ENCODE measurements at regions of chr17 and their contacts with region 1.

Region 1: GRCh38 chr17:56779898-56780733 is 53.6 kb downstream of the C17orf67 start:
- DNase-seq: peak; percentile 80 to 87 (median 84)
- H3K4me3 ChIP-seq: peak overlapping the region in 1 of 2 donors; percentile 58
- H3K4me3 Mint-ChIP-seq: peak overlapping the region; percentile 88 to 100 (median 92)
- H3K27ac ChIP-seq: peak overlapping the region; percentile 56
- H3K27ac Mint-ChIP-seq: peak overlapping the region; percentile 94 to 99 (median 95)
- H3K4me1 ChIP-seq: peaks cover 16% of the 10 kb centered on the region
- H3K4me1 Mint-ChIP-seq: peaks cover 11 to 26% (median 18%) of the 10 kb centered on the region in 4 donors
- H3K27me3 ChIP-seq: no peaks in the 10 kb centered on the region
- H3K27me3 Mint-ChIP-seq: no peaks in the 10 kb centered on the region

Region 2: DNA sequence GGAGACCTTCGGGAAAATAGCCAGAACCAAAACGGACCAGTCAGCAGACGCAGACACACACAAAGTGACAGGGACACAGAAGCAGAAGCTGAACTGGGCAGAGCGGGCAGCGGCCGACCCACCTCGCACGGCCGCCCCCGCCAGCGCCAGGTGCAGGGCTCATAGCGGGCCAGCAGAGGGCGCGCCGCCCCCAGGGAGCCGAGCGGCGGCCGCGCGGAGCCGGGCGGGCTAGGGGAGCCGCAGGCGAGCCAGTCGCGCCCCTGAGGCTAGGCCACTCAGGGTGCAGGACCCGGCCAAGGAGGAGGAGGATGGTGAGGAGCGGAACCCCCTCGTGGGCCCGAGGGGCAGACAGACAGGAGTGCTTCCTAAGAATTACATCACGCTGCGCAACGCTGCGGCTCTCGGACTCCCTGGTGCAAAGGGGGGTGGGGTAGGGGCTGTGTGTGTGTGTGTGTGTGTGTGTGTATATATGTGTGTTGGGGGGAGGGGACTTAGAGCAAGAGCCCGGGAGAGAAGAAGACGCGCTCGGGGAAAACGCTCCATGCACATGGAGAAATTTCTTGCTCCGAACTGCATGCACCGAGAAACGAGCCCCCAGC is 187.5 kb before region 1 on chr17:
- CTCF ChIA-PET with region 1: interaction called, 64 read pairs
- POLR2A ChIA-PET with region 1: interaction called, 7 read pairs
- intact Hi-C with region 1: loop called (anchors 1 kb)
- DNase-seq: peak; percentile 50 to 61 (median 56)
- H3K4me3 ChIP-seq: peak overlapping the region; percentile 26 to 36
- H3K4me3 Mint-ChIP-seq: peak overlapping the region; percentile 73 to 89 (median 79)
- H3K27ac ChIP-seq: no peak overlapping the region
- H3K27ac Mint-ChIP-seq: peak overlapping the region in 1 of 7 donors; percentile 41
- H3K4me1 ChIP-seq: peaks cover 36% of the 10 kb centered on the region
- H3K4me1 Mint-ChIP-seq: peaks cover 11 to 41% (median 18%) of the 10 kb centered on the region in 4 donors
- H3K27me3 ChIP-seq: peaks cover 13% of the 10 kb centered on the region
- H3K27me3 Mint-ChIP-seq: peaks cover 28 to 46% of the 10 kb centered on the region in 2 donors

Region 3: GRCh38 chr17:56608951-56609350 is 171.2 kb before region 1 on chr17:
- CTCF ChIA-PET with region 1: interaction called, 11 read pairs
- POLR2A ChIA-PET with region 1: no interaction called
- intact Hi-C with region 1: no loop called
- DNase-seq: no peak
- H3K4me3 ChIP-seq: no peak overlapping the region
- H3K4me3 Mint-ChIP-seq: no peak overlapping the region
- H3K27ac ChIP-seq: no peak overlapping the region
- H3K27ac Mint-ChIP-seq: no peak overlapping the region
- H3K4me1 ChIP-seq: no peaks in the 10 kb centered on the region
- H3K4me1 Mint-ChIP-seq: peaks cover 0 to 3% (median 0%) of the 10 kb centered on the region in 4 donors
- H3K27me3 ChIP-seq: no peaks in the 10 kb centered on the region
- H3K27me3 Mint-ChIP-seq: peaks cover 12 to 13% of the 10 kb centered on the region in 2 donors

Region 4: DNA sequence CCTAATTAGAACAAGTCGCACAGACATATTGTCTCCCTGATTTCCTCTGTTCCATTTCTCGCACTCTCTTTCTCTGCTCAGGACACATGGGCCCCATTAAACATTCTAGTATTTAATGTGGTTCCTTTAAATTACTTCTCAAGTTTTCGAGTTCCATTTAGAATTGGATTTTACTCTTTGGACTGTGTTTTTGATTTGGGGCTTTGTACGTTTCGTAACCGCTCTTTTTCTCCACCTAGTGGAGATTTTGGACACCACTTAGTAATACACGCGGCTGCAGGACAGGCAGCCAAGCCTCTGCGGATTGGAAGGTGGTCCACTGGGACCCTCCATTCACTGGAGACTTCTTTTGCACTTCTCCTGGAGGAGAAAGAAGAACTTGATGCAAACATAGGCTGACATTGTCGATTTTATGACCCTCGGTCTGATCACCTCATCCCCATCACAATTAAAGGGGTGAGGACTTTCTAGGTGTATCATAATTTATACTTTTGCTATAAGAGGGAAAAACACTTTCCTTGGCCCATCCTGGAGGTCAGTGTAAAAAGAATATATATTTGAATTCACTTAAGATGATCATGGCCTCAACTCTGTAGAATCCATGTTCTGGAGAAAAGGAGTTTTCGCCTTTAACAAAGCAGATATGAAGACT is 100.9 kb before region 1 on chr17:
- CTCF ChIA-PET with region 1: interaction called, 3 read pairs
- POLR2A ChIA-PET with region 1: no interaction called
- intact Hi-C with region 1: loop called (anchors 1 kb)
- DNase-seq: peak in 3 of 5 donors; percentile 8 to 15 (median 14)
- H3K4me3 ChIP-seq: no peak overlapping the region
- H3K4me3 Mint-ChIP-seq: peak overlapping the region; percentile 61 to 81 (median 75)
- H3K27ac ChIP-seq: no peak overlapping the region
- H3K27ac Mint-ChIP-seq: no peak overlapping the region
- H3K4me1 ChIP-seq: peaks cover 39% of the 10 kb centered on the region
- H3K4me1 Mint-ChIP-seq: peaks cover 17 to 21% (median 20%) of the 10 kb centered on the region in 4 donors
- H3K27me3 ChIP-seq: peaks cover 25% of the 10 kb centered on the region
- H3K27me3 Mint-ChIP-seq: peaks cover 46 to 48% of the 10 kb centered on the region in 2 donors

Region 5: DNA sequence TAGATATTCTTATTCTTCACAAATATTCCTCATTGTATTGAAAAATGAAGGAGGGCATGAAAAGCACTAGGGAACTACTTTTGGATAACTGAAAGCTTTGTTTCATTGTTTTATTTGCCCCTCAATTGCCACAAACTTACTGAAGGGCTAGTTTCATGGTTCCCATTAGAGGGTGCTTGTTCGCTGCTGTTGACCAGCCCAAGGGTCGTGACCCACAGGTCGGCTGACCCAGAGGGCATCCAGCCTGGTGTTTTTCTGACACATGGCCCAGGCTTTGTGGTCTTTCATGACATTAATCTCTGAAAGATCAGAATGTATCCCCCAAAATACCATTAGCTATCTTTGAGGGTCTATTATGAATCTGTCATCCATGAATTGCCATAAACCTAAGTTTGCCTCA is 83.9 kb after region 1 on chr17:
- CTCF ChIA-PET with region 1: no interaction called
- POLR2A ChIA-PET with region 1: no interaction called
- intact Hi-C with region 1: no loop called
- DNase-seq: no peak
- H3K4me3 ChIP-seq: no peak overlapping the region
- H3K4me3 Mint-ChIP-seq: no peak overlapping the region
- H3K27ac ChIP-seq: no peak overlapping the region
- H3K27ac Mint-ChIP-seq: no peak overlapping the region
- H3K4me1 ChIP-seq: no peaks in the 10 kb centered on the region
- H3K4me1 Mint-ChIP-seq: no peaks in the 10 kb centered on the region
- H3K27me3 ChIP-seq: no peaks in the 10 kb centered on the region
- H3K27me3 Mint-ChIP-seq: no peaks in the 10 kb centered on the region

Region 6: DNA sequence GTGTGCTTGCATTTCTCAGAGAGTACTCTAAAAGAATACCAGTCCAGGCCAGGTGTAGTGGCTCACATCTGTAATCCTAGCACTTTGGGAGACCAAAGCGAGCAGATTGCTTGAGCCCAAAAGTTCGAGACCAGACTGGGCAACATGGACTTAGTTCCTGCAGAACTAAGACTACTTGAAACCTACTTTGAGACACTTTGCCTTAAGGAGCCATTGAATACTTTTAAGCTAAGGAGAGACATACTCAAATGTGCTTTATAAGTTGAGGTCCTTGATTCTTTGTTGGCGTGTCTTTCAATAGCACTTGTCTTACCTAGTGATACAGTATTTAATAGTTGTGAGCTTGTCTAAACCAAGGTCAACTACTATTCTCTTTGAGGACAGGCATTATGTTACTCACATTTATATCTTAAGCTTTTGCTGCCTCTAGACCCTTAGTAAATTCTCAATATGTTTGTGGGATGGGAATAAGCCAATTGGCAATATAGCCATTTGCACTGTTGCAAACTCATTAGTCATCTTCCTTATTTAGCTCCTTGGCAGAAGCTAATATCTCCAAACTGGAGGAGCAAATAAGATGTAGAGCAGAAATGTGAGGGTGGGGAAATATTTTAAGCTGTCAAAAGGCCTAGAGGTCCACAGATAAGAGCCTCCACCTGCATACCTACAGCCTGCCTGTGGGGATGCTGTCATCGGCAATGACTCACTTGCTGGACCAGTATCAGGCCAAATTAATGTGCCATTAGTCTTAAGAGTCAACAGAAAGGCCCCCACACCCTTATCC is 214.1 kb after region 1 on chr17:
- CTCF ChIA-PET with region 1: no interaction called
- POLR2A ChIA-PET with region 1: no interaction called
- intact Hi-C with region 1: no loop called
- DNase-seq: no peak
- H3K4me3 ChIP-seq: no peak overlapping the region
- H3K4me3 Mint-ChIP-seq: no peak overlapping the region
- H3K27ac ChIP-seq: no peak overlapping the region
- H3K27ac Mint-ChIP-seq: no peak overlapping the region
- H3K4me1 ChIP-seq: no peaks in the 10 kb centered on the region
- H3K4me1 Mint-ChIP-seq: no peaks in the 10 kb centered on the region
- H3K27me3 ChIP-seq: no peaks in the 10 kb centered on the region
- H3K27me3 Mint-ChIP-seq: no peaks in the 10 kb centered on the region